Heart left ventricle (tissue), 16 donors: ENCODE measurements at regions of chr2 and their contacts with region 1.

Region 1: DNA sequence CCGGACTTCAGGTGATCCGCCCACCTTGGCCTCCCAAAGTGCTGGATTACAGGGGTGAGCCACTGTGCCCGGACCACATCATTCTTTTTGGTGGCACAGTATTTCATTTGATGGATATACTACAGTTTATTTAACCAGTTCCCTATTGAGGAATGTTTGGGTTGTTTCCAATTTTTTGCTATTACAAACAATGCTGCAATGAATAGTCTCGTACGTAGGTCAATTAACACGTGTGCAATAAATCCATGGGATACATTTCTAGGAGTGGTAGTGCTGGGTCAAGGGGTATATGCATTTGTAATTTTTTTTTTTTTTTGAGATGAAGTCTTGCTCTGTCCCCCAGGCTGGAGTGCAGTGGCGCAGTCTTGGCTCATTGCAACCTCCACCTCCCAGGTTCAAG is 28.4 kb upstream of the XPO1 start:
- DNase-seq: no peak
- ATAC-seq: no peak
- H3K4me3 ChIP-seq: no peak overlapping the region
- H3K27ac ChIP-seq: no peak overlapping the region
- H3K4me1 ChIP-seq: no peaks in the 10 kb centered on the region
- H3K27me3 ChIP-seq: no peaks in the 10 kb centered on the region
- CTCF ChIP-seq: no peak
- POLR2A ChIP-seq: no peak

Region 2: DNA sequence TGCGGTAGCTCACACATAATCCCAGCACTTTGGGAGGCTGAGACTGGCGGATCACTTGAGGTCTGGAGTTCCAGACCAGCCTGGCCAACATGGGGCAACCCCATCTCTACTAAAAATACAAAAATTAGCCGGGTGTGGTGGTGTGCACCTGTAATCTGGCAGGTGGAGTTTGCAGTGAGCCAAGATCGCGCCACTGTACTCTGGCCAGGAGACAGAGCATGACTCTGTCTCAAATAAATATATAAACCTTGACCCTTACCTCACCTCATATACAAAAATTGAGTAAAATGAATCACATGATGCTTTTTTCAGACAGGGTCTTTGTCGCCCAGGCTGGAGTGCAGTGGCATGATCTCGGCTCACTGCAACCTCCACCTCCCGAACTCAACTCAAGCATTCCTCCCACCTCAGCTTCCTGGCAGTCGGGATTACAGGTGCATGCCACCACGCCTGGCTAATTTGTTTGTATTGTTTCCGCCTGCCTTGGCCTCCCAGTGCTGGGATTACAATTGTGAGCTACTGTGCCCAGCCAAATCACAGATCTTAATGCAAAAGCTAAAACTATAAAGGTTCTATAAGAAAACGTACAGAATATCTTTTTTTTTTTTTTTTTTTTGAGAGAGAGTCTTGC is 53.7 kb before region 1 on chr2:
- intact Hi-C with region 1: no loop called
- DNase-seq: no peak
- ATAC-seq: no peak
- H3K4me3 ChIP-seq: no peak overlapping the region
- H3K27ac ChIP-seq: no peak overlapping the region
- H3K4me1 ChIP-seq: peaks cover 0 to 5% (median 0%) of the 10 kb centered on the region in 12 donors
- H3K27me3 ChIP-seq: no peaks in the 10 kb centered on the region
- CTCF ChIP-seq: no peak
- POLR2A ChIP-seq: no peak

Region 3: DNA sequence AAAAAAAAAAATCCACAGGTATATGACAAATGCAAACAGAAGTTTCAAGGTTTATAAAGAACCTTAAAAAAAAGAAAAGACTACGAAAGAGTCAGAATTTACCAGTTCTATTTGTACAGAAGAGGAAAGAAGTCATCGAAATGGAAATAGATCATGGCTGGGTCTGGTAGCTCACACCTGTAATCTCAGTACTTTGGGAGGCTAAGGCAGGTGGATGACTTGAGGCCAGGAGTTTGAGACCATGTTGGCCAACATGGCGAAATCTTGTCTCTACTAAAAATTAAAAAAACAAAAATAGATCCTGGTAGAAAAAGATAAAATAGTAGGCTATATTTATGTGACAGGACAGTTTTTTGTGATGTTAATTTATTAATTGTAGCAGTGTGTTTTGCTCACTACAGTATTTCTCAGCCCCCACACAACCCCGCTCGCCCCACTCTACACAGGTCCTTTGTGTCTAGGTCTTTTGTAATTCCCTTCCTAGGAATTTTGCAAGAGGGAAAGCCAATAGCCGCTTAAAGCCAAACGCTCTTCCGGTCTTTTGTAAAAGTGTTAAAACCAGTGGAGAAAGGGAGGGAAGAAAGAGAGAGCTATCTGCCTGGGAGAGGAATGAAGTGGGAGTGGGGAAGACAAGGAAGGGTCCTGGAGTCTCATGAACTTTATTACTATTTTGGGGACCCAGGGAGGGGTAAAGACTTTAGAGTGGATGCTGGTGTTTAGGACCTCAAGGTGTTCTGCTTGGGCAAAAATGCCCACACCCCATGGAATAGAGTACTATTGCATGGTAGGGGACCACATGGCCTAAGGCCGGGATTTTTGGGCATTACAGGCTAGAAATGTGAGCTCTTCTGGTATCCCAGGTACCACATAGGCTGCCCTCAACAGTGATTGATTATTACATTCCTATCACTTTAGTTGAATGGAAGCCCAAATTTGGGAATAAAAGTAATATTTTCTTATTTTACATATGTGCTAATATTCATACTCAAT is 31.0 kb after region 1 on chr2:
- intact Hi-C with region 1: loop called in 2 of 10 experiments (anchors 2 to 5 kb)
- DNase-seq: no peak
- ATAC-seq: no peak
- H3K4me3 ChIP-seq: no peak overlapping the region
- H3K27ac ChIP-seq: no peak overlapping the region
- H3K4me1 ChIP-seq: no peaks in the 10 kb centered on the region
- H3K27me3 ChIP-seq: no peaks in the 10 kb centered on the region
- CTCF ChIP-seq: no peak
- POLR2A ChIP-seq: no peak

Region 4: GRCh38 chr2:61620244-61621159 is 53.9 kb after region 1 on chr2:
- intact Hi-C with region 1: loop called in 1 of 10 experiments (anchors 10 kb)
- DNase-seq: peak in 1 of 5 donors; percentile 40
- ATAC-seq: peak in 2 of 4 donors; percentile 34 to 90
- H3K4me3 ChIP-seq: no peak overlapping the region
- H3K27ac ChIP-seq: no peak overlapping the region
- H3K4me1 ChIP-seq: no peaks in the 10 kb centered on the region
- H3K27me3 ChIP-seq: no peaks in the 10 kb centered on the region
- CTCF ChIP-seq: no peak
- POLR2A ChIP-seq: no peak

Region 5: DNA sequence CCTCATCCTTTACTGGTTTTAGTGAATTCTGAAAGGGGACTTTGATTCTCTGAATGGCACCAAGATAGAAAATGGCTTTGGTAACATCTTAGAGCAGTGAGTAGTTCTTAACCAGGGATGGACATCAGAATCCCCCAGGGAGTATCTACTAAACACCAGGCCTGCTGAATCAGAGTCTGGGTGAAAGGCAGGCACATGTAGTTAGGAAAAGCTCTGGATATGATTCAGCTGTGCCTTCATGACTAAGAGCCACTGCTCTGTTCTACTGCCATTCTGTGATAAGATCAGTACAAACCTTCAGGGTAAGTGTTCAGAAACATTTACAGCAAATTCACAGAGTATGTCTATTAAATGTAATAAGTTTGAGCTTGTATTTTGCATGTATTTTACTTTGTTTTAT is 583.1 kb after region 1 on chr2:
- intact Hi-C with region 1: no loop called
- DNase-seq: no peak
- ATAC-seq: peak in 3 of 4 donors; percentile 36 to 81 (median 70)
- H3K4me3 ChIP-seq: no peak overlapping the region
- H3K27ac ChIP-seq: peak overlapping the region in 8 of 12 donors; percentile 52 to 92 (median 78)
- H3K4me1 ChIP-seq: peaks cover 0 to 41% (median 14%) of the 10 kb centered on the region in 12 donors
- H3K27me3 ChIP-seq: no peaks in the 10 kb centered on the region
- CTCF ChIP-seq: no peak
- POLR2A ChIP-seq: no peak